Endothelial cell of umbilical vein (primary cell): ENCODE measurements at regions of chr13 and their contacts with region 1.

Region 1: DNA sequence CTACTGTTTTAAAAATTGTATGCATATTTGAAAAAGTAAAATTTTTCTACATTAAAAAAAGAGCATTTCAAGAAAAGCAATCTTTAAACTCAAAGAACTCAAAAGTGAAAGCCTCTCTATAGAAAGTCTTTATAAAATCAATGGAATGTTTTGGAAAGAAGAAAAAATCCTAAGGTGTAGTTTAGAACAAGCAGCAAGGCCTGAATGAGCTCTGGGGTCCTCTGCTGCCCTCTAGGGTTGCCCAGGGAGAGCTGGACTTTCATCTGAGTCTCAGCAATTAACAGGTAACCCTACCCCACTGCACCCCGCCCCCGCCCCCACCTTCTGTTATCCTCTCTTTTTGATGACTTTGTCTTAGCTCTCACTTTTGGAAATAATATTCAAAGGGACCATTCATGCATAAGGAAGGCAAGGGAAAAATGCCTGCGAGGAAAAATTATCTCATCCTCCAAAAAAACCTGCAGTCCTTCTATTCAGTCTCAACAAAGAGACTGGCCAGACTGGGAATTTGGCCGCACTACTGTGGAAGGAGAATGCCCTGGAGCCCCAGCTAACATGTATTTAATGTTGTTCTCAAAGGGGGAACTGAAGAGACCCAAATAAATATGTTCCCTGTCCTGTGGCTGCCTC is 24.1 kb downstream of the SLC25A30 start:
- DNase-seq: peak; percentile 55
- H3K4me3 ChIP-seq: no peak overlapping the region
- H3K27ac ChIP-seq: no peak overlapping the region
- H3K4me1 ChIP-seq: peaks cover 45% of the 10 kb centered on the region
- H3K27me3 ChIP-seq: no peaks in the 10 kb centered on the region
- CTCF ChIP-seq: peak; percentile 31 to 73
- POLR2A ChIP-seq: no peak

Region 2: GRCh38 chr13:45231722-45232121 is 162.3 kb before region 1 on chr13:
- CTCF ChIA-PET with region 1: no interaction called
- POLR2A ChIA-PET with region 1: no interaction called
- dilution Hi-C with region 1: no loop called
- intact Hi-C with region 1: no loop called
- DNase-seq: peak; percentile 29
- H3K4me3 ChIP-seq: no peak overlapping the region
- H3K27ac ChIP-seq: no peak overlapping the region
- H3K4me1 ChIP-seq: no peaks in the 10 kb centered on the region
- H3K27me3 ChIP-seq: no peaks in the 10 kb centered on the region
- CTCF ChIP-seq: no peak
- POLR2A ChIP-seq: no peak

Region 3: DNA sequence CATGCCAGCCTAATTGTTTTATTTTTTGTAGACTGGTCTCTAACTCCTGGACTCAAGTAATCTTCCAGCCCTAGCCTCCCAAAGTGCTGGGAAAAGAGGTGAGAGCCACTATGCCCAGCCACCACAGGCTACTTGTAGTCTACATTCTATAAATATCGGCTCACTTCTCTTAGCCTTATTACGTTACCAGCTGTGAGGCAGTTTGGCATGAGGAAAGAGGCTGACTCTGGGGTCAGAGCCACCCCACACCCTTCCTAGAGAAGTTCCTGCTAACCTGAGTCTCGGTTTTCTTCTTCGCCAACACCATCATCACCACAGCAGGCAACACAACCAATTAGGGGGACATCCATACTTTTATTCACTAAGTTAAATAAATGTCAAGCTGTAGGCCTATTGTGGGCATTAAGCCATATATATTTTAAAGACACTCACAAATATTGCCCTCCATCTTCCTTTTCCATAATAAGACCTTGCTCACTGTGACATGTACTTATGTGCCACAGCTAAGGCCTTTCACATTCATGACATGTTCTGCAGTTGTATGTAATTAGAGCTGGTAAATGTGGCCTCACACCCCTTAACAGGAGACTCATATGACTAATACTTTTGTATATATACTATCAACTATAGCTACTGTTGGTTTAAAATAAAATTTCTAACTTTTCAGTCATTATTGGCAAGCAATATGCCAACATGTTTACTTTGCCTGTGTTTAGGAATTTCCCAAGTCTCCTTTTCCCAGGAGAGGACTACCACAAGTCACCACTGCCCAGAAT is 18.4 kb after region 1 on chr13:
- CTCF ChIA-PET with region 1: interaction called, 35 read pairs
- POLR2A ChIA-PET with region 1: interaction called, 4 read pairs
- dilution Hi-C with region 1: no loop called
- intact Hi-C with region 1: loop called (anchors 1 kb)
- DNase-seq: peak; percentile 25
- H3K4me3 ChIP-seq: no peak overlapping the region
- H3K27ac ChIP-seq: no peak overlapping the region
- H3K4me1 ChIP-seq: peaks cover 24% of the 10 kb centered on the region
- H3K27me3 ChIP-seq: no peaks in the 10 kb centered on the region
- CTCF ChIP-seq: no peak
- POLR2A ChIP-seq: no peak

Region 4: GRCh38 chr13:45417790-45418534 is 23.9 kb after region 1 on chr13 and contains the start of gene SLC25A30:
- CTCF ChIA-PET with region 1: interaction called, 35 read pairs
- POLR2A ChIA-PET with region 1: interaction called, 4 read pairs
- dilution Hi-C with region 1: no loop called
- intact Hi-C with region 1: loop called (anchors 1 kb)
- DNase-seq: peak; percentile 94
- H3K4me3 ChIP-seq: peak within 1 kb of the TSS; percentile 66 to 87 (median 79)
- H3K27ac ChIP-seq: peak within 1 kb of the TSS; percentile 56
- H3K4me1 ChIP-seq: peaks cover 24% of the 10 kb centered on the region
- H3K27me3 ChIP-seq: no peaks in the 10 kb centered on the region
- CTCF ChIP-seq: no peak
- POLR2A ChIP-seq: peak; percentile 78
- total RNA-seq, gene SLC25A30: 27.0 and 28.9 TPM in 2 replicates

Region 5: DNA sequence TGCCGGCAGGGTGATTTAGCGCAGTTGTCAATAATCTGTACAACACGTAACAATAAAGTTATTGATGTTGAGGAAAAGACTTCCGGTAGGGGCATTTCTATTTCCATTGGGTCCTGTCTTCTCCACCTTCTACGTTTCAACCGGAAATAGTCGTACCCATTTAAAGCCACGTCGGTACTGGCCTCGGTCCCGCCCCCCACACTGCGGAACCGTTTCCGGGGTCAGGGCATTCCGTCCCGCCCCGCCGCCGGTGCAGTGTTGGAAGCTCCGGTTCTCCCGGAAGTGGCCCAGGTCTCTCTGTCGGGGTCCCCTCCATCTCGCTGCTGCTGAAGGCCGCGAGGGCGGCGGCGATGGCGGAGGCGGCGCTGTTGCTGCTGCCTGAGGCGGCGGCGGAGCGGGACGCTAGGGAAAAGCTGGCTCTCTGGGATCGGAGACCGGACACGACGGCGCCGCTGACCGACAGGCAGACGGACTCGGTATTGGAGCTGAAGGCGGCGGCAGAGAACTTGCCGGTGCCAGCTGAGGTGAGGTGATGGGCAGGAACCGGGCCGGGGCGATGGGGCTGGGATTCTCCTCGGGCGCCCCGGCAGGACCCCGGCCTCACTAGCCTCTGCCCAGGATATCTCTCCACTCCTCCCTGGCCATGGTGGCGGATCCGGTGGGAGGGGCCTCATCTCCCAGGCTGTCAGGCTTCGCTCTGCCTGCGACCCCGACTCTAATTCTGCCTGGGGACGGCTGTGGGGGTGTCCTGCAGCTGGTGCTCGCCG is 70.8 kb after region 1 on chr13 and contains the start of gene COG3:
- CTCF ChIA-PET with region 1: interaction called, 4 read pairs
- POLR2A ChIA-PET with region 1: no interaction called
- dilution Hi-C with region 1: no loop called
- intact Hi-C with region 1: loop called (anchors 1 kb)
- DNase-seq: peak; percentile 96
- H3K4me3 ChIP-seq: peak within 1 kb of the TSS; percentile 44 to 86 (median 71)
- H3K27ac ChIP-seq: peak within 1 kb of the TSS; percentile 72
- H3K4me1 ChIP-seq: peaks cover 12% of the 10 kb centered on the region
- H3K27me3 ChIP-seq: peaks cover 4 to 8% of the 10 kb centered on the region in 2 experiments
- CTCF ChIP-seq: peak in 1 of 2 donors; percentile 25
- POLR2A ChIP-seq: peak; percentile 63
- total RNA-seq, gene COG3: 27.0 and 28.7 TPM in 2 replicates

Region 6: GRCh38 chr13:45482571-45483173 is 88.6 kb after region 1 on chr13:
- CTCF ChIA-PET with region 1: interaction called, 14 read pairs
- POLR2A ChIA-PET with region 1: no interaction called
- dilution Hi-C with region 1: no loop called
- intact Hi-C with region 1: no loop called
- DNase-seq: peak; percentile 78
- H3K4me3 ChIP-seq: no peak overlapping the region
- H3K27ac ChIP-seq: peak overlapping the region; percentile 28
- H3K4me1 ChIP-seq: peaks cover 17% of the 10 kb centered on the region
- H3K27me3 ChIP-seq: no peaks in the 10 kb centered on the region
- CTCF ChIP-seq: no peak
- POLR2A ChIP-seq: no peak

Region 7: GRCh38 chr13:45521297-45521696 is 127.2 kb after region 1 on chr13:
- CTCF ChIA-PET with region 1: no interaction called
- POLR2A ChIA-PET with region 1: no interaction called
- dilution Hi-C with region 1: no loop called
- intact Hi-C with region 1: no loop called
- DNase-seq: no peak
- H3K4me3 ChIP-seq: no peak overlapping the region
- H3K27ac ChIP-seq: no peak overlapping the region
- H3K4me1 ChIP-seq: no peaks in the 10 kb centered on the region
- H3K27me3 ChIP-seq: no peaks in the 10 kb centered on the region
- CTCF ChIP-seq: no peak
- POLR2A ChIP-seq: no peak

Region 8: DNA sequence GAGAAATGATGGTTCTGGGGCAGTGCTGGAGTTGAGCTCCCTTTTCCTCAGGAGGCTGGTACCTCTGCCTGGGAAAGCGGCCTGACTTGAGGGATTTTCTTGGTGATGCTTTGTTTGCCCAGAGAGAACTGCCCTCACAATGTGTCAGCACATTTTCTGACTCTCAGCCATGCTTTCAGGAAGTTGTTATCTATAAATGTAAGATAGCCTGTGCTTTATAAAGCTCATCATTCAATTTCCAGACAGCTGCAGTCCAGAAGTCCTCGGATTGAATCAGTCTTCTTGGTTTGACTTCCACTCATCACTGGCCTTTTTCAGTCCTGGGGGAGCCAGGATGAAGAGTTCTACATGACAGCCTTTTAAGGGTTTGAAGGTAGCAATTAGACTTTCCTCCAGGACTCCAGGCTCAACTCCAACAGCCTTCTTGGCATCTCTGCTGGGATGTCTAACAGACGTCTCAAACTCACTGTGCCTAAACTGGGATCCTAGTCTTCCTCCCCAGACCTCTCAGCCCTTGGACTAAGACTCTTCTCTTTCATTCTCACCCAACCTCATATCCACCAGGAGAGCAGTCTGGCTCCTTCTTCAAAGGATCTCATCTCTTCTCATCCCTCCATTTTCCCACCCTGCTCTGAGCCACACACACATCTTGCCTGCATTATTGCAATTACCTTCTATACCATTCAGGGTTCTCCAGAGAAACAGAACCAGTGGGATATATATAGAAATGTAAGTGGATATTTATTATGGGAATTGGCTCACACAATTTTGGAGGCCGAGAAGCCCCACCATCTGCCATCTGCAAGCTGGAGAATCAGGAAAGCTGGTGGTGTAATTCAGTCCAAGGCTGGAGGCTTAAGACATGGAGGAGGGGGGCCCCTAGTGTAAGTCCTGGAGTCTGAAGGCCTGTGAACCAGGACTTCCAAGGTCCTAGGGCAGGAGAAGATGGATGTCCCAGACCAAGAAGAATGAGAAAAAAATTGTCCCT is 208.4 kb after region 1 on chr13:
- CTCF ChIA-PET with region 1: no interaction called
- POLR2A ChIA-PET with region 1: no interaction called
- dilution Hi-C with region 1: no loop called
- intact Hi-C with region 1: no loop called
- DNase-seq: no peak
- H3K4me3 ChIP-seq: no peak overlapping the region
- H3K27ac ChIP-seq: no peak overlapping the region
- H3K4me1 ChIP-seq: no peaks in the 10 kb centered on the region
- H3K27me3 ChIP-seq: peaks cover 0 to 2% of the 10 kb centered on the region in 2 experiments
- CTCF ChIP-seq: no peak
- POLR2A ChIP-seq: no peak